Activated T-helper 1 cell treated with anti-CD3 and anti-CD28 coated beads, Interleukin-12 subunit alpha, Interleukin-12 subunit beta, Interleukin-2, Interleukin-4 antibody, amounts not matched to agents 30 ng/mL and 10 ng/mL and 1 ng/mL, durations not matched to agents 14 hours and 24 hours and 36 hours (primary cell): ENCODE measurements at regions of chr3 and their contacts with region 1.

Region 1: GRCh38 chr3:78659386-78659987 is 1108.3 kb downstream of the ROBO1 start:
- DNase-seq: no peak
- H3K4me3 Mint-ChIP-seq: no peak overlapping the region
- H3K27ac Mint-ChIP-seq: no peak overlapping the region
- H3K4me1 Mint-ChIP-seq: no peaks in the 10 kb centered on the region
- H3K27me3 Mint-ChIP-seq: no peaks in the 10 kb centered on the region

Region 2: DNA sequence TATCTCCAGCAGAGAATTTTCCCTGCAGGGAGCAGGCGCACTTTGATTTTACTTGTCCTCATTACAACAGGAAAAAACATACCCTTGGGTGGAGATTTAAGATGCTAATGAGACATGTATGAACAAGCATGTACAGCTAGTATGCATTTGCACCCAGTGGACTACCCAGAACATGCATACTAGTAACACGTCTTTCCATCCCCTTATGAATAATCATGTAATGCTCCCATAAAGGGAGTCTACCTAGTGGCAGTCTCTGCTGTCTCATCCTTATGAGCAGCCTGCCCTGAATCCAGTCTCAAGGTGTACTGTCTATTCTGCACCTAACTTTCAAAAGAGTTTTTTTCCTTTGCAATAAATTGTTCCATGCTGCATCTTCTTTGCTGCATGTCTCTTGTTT is 113.7 kb before region 1 on chr3:
- intact Hi-C with region 1: no loop called
- DNase-seq: no peak
- H3K4me3 Mint-ChIP-seq: no peak overlapping the region
- H3K27ac Mint-ChIP-seq: no peak overlapping the region
- H3K4me1 Mint-ChIP-seq: no peaks in the 10 kb centered on the region
- H3K27me3 Mint-ChIP-seq: no peaks in the 10 kb centered on the region

Region 3: GRCh38 chr3:78683284-78683683 is 23.8 kb after region 1 on chr3:
- intact Hi-C with region 1: no loop called
- DNase-seq: no peak
- H3K4me3 Mint-ChIP-seq: no peak overlapping the region
- H3K27ac Mint-ChIP-seq: no peak overlapping the region
- H3K4me1 Mint-ChIP-seq: no peaks in the 10 kb centered on the region
- H3K27me3 Mint-ChIP-seq: no peaks in the 10 kb centered on the region

Region 4: DNA sequence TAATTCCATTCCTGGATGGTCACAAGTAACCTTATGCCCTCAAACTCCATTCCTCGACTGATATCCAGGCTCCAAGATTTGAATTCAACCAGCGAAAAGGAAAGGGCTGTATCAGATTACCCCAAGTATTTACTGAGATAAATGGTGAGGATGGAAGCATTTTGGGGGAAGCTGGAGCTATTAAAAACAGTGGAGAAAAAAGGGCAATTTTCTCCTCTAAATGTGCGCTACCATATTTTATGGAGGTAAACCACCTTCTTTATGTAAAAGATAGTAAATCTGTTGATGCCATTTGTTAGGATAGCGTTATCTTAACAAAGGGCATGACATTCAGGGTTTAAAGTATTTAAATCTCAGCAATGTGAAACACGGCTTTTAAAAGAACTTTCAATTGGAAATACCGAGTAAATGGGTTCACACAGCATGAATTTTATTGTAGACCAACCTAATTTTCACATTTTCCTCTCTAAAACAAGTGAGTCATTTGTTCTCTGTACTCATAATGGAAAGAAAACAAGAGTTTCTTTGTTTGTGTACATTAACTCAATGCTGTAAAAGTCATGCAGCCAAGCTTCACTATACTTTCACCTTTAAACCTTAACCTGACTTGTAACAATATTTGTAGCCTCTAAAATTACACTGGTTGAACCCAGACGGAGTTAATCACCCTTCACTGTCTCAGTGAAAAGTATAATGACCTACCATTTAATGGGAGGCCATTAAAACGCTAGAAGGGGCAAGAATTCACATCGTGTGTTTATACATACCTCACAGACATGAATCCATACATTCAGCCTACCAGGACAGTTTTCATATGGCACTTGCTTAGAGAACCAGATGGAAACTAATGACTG is 334.9 kb after region 1 on chr3:
- intact Hi-C with region 1: no loop called
- DNase-seq: no peak
- H3K4me3 Mint-ChIP-seq: no peak overlapping the region
- H3K27ac Mint-ChIP-seq: no peak overlapping the region
- H3K4me1 Mint-ChIP-seq: no peaks in the 10 kb centered on the region
- H3K27me3 Mint-ChIP-seq: no peaks in the 10 kb centered on the region

Region 5: GRCh38 chr3:79032686-79033318 is 373.3 kb after region 1 on chr3:
- intact Hi-C with region 1: loop called (anchors 1 kb)
- DNase-seq: no peak
- H3K4me3 Mint-ChIP-seq: no peak overlapping the region
- H3K27ac Mint-ChIP-seq: no peak overlapping the region
- H3K4me1 Mint-ChIP-seq: no peaks in the 10 kb centered on the region
- H3K27me3 Mint-ChIP-seq: no peaks in the 10 kb centered on the region

Region 6: DNA sequence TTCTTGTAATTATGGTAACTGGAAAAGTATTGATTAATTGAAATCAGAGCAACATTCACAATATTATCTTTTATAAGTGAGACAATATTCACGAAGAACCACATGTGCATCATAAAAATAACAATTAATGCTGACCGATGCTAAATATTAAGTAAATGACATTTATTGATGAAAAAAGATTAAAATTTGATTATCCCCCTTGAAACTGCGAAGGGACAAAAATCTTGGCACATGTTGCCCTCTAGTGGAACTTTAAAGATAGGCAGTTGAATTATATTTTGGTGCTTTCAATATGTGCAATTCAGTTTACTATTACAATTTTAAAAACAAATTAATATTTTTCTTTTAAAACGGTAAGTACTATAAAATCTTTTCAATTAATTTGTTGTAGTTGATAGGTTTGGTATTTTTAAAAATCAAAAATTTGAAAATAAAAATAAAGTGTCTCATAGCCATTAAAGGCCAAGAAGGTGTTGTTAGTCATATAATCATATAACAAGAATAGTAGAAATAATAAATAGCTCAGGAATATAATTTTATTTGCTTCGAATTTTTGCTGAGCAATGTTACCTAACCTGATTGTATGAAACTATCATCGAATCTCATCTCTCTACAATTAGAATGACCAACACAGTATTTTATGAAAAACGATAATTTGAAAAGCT is 838.1 kb after region 1 on chr3:
- intact Hi-C with region 1: loop called (anchors 5 kb)
- DNase-seq: no peak
- H3K4me3 Mint-ChIP-seq: no peak overlapping the region
- H3K27ac Mint-ChIP-seq: no peak overlapping the region
- H3K4me1 Mint-ChIP-seq: no peaks in the 10 kb centered on the region
- H3K27me3 Mint-ChIP-seq: no peaks in the 10 kb centered on the region

Region 7: DNA sequence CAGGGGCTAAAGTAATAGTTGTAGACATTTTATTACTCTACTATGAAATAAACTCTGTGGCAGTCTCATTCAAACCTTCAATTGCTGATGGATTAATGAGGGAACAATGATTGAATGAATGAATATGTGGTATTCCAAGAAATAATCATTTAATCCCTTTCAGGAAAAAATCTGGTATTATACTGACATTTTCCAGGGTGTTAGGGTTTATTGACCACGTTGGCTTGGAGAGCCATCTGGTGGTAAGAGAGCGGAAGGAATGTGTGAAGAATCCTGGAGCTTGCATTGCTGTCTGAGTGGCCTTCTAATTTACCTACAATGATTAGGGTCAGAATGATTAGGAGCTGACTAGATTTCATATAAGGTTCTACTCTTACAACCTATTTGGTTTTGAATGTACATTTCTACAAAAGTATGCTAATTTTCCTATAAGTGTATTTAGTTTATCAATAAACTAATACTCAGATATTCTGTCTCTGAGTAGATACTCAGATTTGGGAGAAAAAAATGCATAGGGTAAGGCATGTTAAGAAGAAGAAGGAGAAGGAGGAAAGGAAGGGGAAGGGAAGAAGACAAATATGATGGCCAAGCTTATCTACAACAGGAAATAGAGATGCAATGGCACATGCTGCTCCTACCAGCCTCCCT is 858.4 kb after region 1 on chr3:
- intact Hi-C with region 1: loop called (anchors 2 kb)
- DNase-seq: no peak
- H3K4me3 Mint-ChIP-seq: no peak overlapping the region
- H3K27ac Mint-ChIP-seq: no peak overlapping the region
- H3K4me1 Mint-ChIP-seq: no peaks in the 10 kb centered on the region
- H3K27me3 Mint-ChIP-seq: no peaks in the 10 kb centered on the region